ENCODE measurements at regions of chr4 and their contacts with region 1.

Region 1: GRCh38 chr4:7014806-7015205 is 28.4 kb upstream of the TADA2B start:
- DNase-seq: no peak
- H3K4me3 ChIP-seq: no peak overlapping the region
- H3K27ac ChIP-seq: no peak overlapping the region
- H3K4me1 ChIP-seq: no peaks in the 10 kb centered on the region
- H3K27me3 ChIP-seq: no peaks in the 10 kb centered on the region
- CTCF ChIP-seq: no peak
- POLR2A ChIP-seq: no peak

Region 2: DNA sequence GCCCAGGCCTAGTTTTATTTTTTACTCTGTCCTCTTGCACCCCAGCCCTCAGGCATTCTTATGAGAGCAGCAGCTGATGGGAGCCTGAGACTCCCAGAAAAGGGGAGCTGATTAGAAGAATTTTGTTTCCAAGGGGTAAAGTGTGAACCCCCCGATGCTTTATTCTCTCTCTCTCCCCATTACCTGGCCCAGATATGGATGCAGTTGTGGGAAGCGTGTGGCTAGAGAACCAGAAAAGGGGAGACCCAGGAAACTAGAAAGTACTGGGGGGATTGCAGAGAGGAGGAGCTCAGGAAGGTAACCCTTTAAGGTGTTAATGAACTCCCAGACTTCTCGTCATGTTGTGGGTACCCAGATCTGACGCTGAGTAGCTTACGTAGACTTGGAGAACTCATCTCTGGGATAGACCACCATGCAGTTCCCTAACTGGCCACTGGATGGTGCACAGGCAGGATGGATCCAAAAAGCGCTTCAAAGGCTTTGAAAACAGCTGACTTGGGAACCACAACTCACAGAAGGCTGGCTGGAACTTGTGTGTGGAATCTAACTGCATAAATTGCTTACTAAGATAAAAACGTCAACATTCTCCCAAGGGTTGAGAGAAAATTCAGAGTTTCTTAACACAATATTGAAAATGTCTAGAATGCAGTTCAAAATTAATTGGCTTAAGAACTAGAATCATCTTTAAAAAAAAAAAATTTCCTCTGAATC is 40.5 kb before region 1 on chr4:
- intact Hi-C with region 1: no loop called
- DNase-seq: peak; percentile 77 to 82
- H3K4me3 ChIP-seq: no peak overlapping the region
- H3K27ac ChIP-seq: no peak overlapping the region
- H3K4me1 ChIP-seq: no peaks in the 10 kb centered on the region
- H3K27me3 ChIP-seq: no peaks in the 10 kb centered on the region
- CTCF ChIP-seq: peak; percentile 96 to 99 (median 98)
- POLR2A ChIP-seq: no peak

Region 3: DNA sequence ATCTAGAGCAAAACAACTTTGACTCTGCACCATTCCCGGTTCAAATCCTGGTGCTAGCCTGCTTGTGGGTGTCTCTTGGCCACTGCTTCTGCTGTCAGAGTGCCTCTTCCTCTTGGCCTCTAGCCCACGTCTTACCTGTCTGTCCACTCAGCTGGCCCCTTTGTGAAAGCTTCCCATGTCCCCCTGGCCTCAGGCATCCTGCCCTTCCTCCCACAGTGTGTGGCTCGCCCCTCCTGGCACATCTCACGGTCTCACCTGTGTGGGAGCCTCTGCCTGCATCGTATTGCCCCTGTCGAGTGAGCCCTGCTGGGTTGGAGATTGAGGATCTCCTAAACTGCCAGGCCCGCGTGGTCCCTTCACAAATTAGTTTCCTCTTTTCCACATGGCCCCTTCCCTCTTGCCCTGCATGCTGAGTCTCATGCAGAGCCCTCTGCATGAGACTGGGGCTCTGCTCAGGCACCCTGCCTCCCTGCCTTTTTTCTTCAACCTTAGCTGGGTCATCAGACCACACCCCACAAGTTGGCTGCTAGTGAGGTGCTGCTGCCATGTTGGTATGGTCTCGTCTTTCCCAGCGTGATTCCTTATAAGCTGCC is 25.4 kb before region 1 on chr4:
- intact Hi-C with region 1: loop called (anchors 1 kb)
- DNase-seq: no peak
- H3K4me3 ChIP-seq: peak overlapping the region in 1 of 3 donors; percentile 26
- H3K27ac ChIP-seq: peak overlapping the region; percentile 17 to 21
- H3K4me1 ChIP-seq: peaks cover 15 to 42% of the 10 kb centered on the region in 2 donors
- H3K27me3 ChIP-seq: no peaks in the 10 kb centered on the region
- CTCF ChIP-seq: no peak
- POLR2A ChIP-seq: no peak

Measured in breast epithelium (tissue), 4 donors.